ENCODE measurements at regions of chr6 and their contacts with region 1.

Region 1: GRCh38 chr6:155418017-155418761 is 37.5 kb downstream of the NOX3 start:
- DNase-seq: peak; percentile 87
- H3K4me3 Mint-ChIP-seq: peak overlapping the region; percentile 38
- H3K27ac Mint-ChIP-seq: peak overlapping the region; percentile 98
- H3K4me1 Mint-ChIP-seq: peaks cover 55% of the 10 kb centered on the region
- H3K27me3 Mint-ChIP-seq: no peaks in the 10 kb centered on the region

Region 2: DNA sequence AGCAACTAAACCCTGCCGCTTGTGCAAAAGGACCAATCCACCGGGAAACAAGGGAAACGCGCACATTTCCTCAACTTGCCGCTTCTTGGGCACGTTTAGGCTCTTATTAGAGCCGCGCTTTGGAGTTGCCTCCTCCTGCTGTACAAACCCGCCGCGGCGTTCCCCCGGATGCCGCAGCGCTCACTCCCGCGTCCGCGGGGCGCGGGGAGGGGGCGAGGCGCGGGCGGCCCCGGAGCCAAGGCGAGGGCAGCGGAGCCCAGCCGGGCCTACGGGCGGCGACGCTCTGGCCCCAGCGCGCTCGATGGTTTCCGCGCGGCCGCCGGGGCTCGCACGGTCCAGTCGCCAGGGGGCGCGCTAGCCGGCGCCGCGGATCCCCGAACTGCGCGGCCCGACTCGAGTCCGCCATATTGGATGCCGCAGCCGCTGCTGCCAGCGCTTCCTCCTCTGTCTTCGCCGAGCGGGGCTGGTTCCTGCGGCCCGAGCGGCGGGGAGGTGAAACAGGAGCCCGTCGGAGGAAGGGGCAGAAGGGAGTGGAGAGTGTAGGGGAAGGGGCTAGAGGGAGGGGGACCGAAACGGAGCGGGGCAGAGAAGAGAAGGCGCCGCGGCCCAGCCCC is 685.1 kb before region 1 on chr6 and contains the start of gene SCAF8:
- CTCF ChIA-PET with region 1: no interaction called
- POLR2A ChIA-PET with region 1: no interaction called
- intact Hi-C with region 1: loop called (anchors 10 kb)
- DNase-seq: peak; percentile 86
- H3K4me3 Mint-ChIP-seq: peak within 1 kb of the TSS; percentile 85
- H3K27ac Mint-ChIP-seq: peak within 1 kb of the TSS; percentile 84
- H3K4me1 Mint-ChIP-seq: peaks cover 34% of the 10 kb centered on the region
- H3K27me3 Mint-ChIP-seq: no peaks in the 10 kb centered on the region
- total RNA-seq, gene SCAF8: 30.1 to 31.7 TPM

Region 3: DNA sequence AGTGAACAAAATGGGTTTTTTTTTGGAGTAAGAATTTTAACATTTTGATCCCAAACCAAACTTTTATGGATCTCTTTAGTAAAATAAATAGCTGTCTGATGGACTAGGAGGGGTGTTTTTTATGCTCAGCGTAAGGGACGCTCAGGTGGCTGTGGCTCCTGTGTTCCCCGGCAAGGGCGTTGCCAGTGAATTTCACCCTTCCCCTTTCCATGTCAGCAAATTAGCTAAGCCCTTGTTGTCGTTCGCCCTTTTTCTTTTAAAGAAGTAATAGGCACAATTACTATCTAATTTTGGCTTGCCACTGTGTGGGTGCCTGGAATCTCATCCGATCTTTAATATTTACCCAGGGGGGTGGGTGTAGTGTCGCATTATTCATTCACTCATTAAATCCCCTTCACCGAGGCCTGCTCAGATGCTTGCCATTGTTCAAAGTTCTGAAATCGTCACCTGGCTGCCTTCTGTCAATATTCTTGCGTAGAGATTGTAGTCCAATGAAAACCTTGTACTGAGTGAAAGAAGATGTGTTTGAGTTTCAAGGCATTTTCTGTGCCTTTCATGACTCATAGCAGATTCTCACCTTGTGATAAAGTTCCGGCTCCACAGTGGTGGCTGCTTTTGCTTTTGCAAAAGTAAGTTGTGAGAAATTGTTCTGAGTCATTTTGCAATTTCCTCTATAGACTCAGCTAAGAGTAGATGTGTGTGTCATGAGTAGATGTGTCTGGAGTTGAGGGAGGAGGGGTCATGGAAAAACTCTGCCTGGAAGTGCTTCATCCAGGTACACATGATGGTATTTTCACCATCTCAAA is 194.3 kb before region 1 on chr6:
- CTCF ChIA-PET with region 1: no interaction called
- POLR2A ChIA-PET with region 1: no interaction called
- intact Hi-C with region 1: loop called (anchors 1 kb)
- DNase-seq: peak; percentile 78
- H3K4me3 Mint-ChIP-seq: peak overlapping the region; percentile 40
- H3K27ac Mint-ChIP-seq: peak overlapping the region; percentile 75
- H3K4me1 Mint-ChIP-seq: peaks cover 17% of the 10 kb centered on the region
- H3K27me3 Mint-ChIP-seq: peaks cover 6% of the 10 kb centered on the region

Region 4: DNA sequence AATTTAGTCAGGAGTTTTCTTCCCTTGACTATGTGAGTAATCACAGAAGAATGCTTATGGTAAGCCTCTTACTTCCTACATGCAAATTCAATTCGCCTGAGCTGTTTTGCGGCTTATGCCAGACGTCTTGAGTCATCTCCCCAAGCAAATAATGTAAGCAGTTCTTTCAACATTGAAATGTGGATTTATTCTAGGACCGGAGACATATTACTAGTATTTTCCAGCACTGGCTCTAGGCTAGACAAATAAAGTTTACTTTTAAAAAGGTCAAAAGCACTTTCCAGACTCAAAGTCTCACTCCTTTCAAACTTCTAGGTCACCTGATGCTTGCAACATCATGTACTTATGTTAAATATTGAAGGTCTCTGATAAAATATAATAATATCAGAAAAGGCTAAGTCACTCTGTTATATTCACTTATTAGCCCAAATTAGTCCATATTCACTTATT is 75.5 kb after region 1 on chr6:
- CTCF ChIA-PET with region 1: interaction called, 4 read pairs
- POLR2A ChIA-PET with region 1: interaction called, 4 read pairs
- intact Hi-C with region 1: loop called (anchors 1 kb)
- DNase-seq: peak; percentile 62
- H3K4me3 Mint-ChIP-seq: no peak overlapping the region
- H3K27ac Mint-ChIP-seq: peak overlapping the region; percentile 34
- H3K4me1 Mint-ChIP-seq: peaks cover 33% of the 10 kb centered on the region
- H3K27me3 Mint-ChIP-seq: no peaks in the 10 kb centered on the region

Region 5: DNA sequence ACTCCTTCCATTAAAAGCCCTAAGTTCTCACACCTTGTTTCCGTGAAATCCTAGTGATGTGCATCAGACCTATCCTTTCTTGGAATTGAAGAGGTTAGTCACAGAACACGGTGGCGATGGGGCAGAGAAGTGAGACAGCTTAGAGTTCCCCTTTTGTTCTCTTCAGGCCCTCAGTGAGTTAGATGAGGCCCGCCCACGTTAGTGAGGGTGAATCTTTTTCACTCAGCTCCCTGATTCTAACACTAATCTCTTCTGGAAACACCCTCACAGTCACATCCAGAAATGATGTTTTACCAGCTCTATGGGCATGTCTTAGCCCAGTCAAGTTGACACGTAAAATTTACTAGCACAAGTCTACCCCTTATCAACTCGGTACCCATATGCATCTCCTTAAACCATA is 210.1 kb after region 1 on chr6:
- CTCF ChIA-PET with region 1: no interaction called
- POLR2A ChIA-PET with region 1: interaction called, 5 read pairs
- intact Hi-C with region 1: loop called (anchors 1 kb)
- DNase-seq: peak; percentile 85
- H3K4me3 Mint-ChIP-seq: peak overlapping the region; percentile 8
- H3K27ac Mint-ChIP-seq: peak overlapping the region; percentile 95
- H3K4me1 Mint-ChIP-seq: peaks cover 18% of the 10 kb centered on the region
- H3K27me3 Mint-ChIP-seq: peaks cover 1% of the 10 kb centered on the region

Region 6: GRCh38 chr6:157107915-157108651 is 1689.9 kb after region 1 on chr6:
- CTCF ChIA-PET with region 1: no interaction called
- POLR2A ChIA-PET with region 1: no interaction called
- intact Hi-C with region 1: loop called (anchors 2 kb)
- DNase-seq: peak; percentile 27
- H3K4me3 Mint-ChIP-seq: no peak overlapping the region
- H3K27ac Mint-ChIP-seq: no peak overlapping the region
- H3K4me1 Mint-ChIP-seq: peaks cover 45% of the 10 kb centered on the region
- H3K27me3 Mint-ChIP-seq: no peaks in the 10 kb centered on the region

Measured in activated CD4-positive, alpha-beta memory T cell treated with anti-CD3 and anti-CD28 coated beads for 36 hours (primary cell).